WTC11 (cell line): ENCODE measurements at regions of chr11 and their contacts with region 1.

Region 1: GRCh38 chr11:113587308-113587739 is 112.1 kb upstream of the DRD2 start:
- DNase-seq: no peak
- ATAC-seq: peak; percentile 60
- H3K4me3 Mint-ChIP-seq: no peak overlapping the region
- H3K27ac Mint-ChIP-seq: no peak overlapping the region
- H3K4me1 Mint-ChIP-seq: peaks cover 2% of the 10 kb centered on the region; the same call in 1 of the 2 replicates
- H3K27me3 Mint-ChIP-seq: no peaks in the 10 kb centered on the region
- CTCF ChIP-seq: no peak

Region 2: GRCh38 chr11:113613619-113614018 is 26.3 kb after region 1 on chr11:
- CTCF ChIA-PET with region 1: no interaction called
- POLR2A ChIA-PET with region 1: no interaction called
- DNase-seq: no peak
- ATAC-seq: no peak
- H3K4me3 Mint-ChIP-seq: no peak overlapping the region
- H3K27ac Mint-ChIP-seq: no peak overlapping the region
- H3K4me1 Mint-ChIP-seq: peaks cover 4% of the 10 kb centered on the region
- H3K27me3 Mint-ChIP-seq: no peaks in the 10 kb centered on the region
- CTCF ChIP-seq: no peak

Region 3: GRCh38 chr11:113725407-113725806 is 138.1 kb after region 1 on chr11:
- CTCF ChIA-PET with region 1: interaction called, 19 read pairs
- POLR2A ChIA-PET with region 1: no interaction called
- DNase-seq: no peak
- ATAC-seq: no peak
- H3K4me3 Mint-ChIP-seq: no peak overlapping the region
- H3K27ac Mint-ChIP-seq: no peak overlapping the region
- H3K4me1 Mint-ChIP-seq: peaks cover 6% of the 10 kb centered on the region; the same call in 1 of the 2 replicates
- H3K27me3 Mint-ChIP-seq: no peaks in the 10 kb centered on the region
- CTCF ChIP-seq: no peak

Region 4: GRCh38 chr11:113730887-113731726 is 143.8 kb after region 1 on chr11:
- CTCF ChIA-PET with region 1: interaction called, 19 read pairs
- POLR2A ChIA-PET with region 1: no interaction called
- DNase-seq: peak; percentile 43
- ATAC-seq: peak; percentile 87
- H3K4me3 Mint-ChIP-seq: no peak overlapping the region
- H3K27ac Mint-ChIP-seq: no peak overlapping the region
- H3K4me1 Mint-ChIP-seq: no peaks in the 10 kb centered on the region
- H3K27me3 Mint-ChIP-seq: no peaks in the 10 kb centered on the region
- CTCF ChIP-seq: no peak